HEK293 (cell line): ENCODE measurements at regions of chr11 and their contacts with region 1.

Region 1: DNA sequence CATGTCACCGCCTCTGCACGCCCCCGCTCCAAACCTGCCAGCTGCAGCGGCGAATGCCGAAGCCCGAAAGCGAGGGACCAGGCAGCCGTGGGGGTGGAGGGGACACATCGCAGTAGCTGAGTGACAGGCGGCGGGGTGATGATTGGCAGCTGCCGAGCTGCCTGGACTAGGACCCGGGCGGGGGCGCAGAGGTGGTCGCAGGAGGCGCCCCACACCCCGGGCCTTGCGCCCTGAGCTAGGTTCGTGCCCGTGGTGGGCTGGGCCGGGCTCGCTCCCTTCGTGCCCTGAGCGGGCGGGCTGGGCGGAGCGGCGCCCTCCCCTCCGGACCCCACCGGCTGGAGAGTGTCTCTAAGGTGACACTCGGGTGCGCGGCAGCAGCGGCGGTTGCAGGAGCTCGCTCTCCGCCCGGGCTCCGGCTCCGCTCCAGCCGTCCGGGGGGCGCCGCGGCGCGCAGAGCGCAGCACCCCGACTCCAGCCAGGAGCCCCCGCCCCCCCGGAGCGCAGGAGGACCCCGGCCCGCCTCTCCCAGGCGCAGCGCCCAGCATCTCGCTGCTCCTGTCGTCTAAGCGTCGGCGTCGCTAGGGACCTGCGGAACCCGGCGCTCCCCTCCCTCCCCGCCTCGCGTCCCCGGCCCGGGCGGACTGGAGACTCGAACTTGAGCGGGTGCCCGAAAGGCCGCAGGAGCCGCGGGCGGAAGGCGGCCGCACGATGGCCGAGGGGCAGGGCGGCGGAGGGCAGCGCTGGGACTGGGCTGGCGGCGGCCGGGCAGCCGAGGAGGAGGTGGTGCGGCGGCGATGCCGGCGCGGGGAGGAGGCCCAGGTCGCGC is 14.5 kb upstream of the DGKZ start:
- H3K4me3 ChIP-seq: peak overlapping the region; percentile 34
- H3K27ac ChIP-seq: no peak overlapping the region
- H3K4me1 ChIP-seq: no peaks in the 10 kb centered on the region
- CTCF ChIP-seq: no peak

Region 2: DNA sequence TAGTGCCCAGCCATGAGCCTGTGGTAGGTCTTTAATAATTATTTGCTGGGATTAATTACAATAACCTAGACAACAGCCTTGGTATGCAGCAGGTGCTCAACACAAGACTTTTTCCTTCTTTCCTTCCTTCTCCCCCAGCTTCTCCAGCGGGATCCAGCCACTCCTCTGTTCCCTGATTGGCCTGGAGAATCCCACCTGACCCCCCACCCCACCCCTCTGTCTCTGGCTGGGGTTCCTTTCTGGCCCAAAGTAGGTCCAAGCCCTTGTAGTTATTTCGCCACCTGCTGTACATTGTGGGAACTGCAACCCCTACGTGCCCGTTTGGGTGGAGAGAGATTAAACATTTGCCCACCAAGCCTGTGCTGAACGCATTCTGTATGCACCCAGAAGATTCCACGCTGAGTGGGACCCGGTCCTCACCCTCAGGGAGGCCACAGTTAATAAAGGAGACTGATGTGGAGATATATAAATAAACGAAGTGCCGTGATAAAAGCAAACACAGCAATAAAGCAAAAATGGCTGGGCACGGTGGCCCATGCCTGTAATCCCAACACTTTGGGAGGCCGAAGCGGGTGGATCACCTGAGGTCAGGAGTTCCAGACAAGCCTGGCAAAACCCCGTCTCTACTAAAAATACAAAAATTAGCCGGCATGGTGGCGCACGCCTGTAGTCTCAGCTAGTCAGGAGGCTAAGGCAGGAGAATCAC is 17.6 kb before region 1 on chr11:
- CTCF ChIA-PET with region 1: interaction called, 13 read pairs
- POLR2A ChIA-PET with region 1: no interaction called
- H3K4me3 ChIP-seq: no peak overlapping the region
- H3K27ac ChIP-seq: no peak overlapping the region
- H3K4me1 ChIP-seq: no peaks in the 10 kb centered on the region
- CTCF ChIP-seq: no peak

Region 3: DNA sequence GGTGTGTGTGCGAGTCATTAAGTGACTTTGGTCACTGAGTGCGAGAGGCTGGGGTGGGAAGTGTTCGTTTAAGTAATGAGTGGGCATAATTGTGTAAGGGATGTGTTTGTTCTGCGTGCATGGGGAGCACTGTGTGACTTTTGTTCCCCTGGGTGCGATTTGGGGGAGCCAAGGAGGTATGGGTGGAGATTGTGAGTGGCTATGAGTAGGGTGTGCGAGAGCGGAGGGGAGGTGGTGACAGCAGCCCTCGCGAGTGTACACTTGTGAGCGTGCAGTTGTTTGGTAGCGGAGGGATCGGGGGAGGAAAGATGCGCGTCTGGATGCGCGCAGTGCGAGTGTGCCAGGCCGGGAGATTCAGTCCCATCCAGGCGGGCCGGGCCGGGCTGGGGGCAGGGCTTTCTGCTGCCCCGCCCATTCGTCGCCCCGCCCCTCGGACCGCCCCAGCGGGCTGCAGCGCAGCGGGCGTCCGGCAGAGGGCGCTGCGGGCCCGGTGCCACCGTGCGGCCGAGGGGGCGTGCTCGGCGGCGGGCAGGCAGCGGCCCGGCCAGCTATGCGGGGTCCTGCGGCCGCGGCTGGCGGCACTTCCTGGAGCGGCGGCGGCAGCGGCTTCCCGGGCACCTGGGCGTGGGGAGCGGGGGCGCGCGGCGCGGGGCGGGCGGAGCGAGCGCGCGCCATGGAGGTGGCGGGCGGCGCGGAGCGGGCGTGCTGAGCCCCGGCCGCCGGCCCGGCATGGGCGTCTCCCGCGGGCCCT is 14.3 kb after region 1 on chr11 and contains the start of gene DGKZ:
- CTCF ChIA-PET with region 1: interaction called, 16 read pairs
- POLR2A ChIA-PET with region 1: no interaction called
- H3K4me3 ChIP-seq: peak within 1 kb of the TSS; percentile 85
- H3K27ac ChIP-seq: peak within 1 kb of the TSS; percentile 64; the same call in 1 of the 2 replicates
- H3K4me1 ChIP-seq: no peaks in the 10 kb centered on the region; the same call in 1 of the 2 replicates
- CTCF ChIP-seq: no peak; the same call in 1 of the 2 replicates

Region 4: DNA sequence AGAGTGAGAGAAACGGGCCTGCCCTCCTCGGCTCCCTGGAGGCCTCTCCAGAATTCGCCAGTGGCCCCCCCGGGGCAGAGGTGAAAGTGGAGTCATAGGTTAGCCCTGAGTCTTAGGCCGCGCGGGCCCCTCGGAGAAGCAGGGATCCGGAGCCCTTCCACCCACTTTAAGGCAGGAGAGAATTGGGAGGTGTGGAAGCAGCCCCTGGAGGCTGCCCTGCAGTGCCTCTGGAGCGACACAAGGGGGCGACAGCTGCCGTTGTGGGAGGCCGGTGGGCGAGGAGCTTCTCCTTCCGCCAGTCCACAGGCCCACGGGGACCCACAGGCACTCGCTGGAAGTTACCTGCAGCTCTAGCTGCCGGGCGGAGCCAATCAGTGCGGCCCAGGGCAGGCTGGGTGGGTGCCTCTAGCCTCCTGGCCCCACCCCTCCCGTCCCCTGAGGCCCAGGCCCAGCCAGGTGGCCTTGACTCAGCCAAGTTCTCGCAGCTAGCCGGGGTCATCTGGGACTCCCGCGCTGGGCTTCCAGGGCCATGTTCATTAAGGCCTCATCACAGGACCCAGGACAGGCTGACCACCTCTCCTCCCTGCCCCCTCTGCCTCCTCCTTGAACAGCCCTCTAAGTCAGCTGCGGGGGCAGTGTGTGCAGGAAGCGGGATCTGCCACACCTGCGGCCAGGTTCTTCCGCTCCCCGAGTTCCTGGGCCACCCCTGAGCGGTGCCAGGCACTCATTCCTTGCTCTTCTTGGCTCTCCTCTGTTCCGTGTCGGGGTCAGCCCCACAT is 19.5 kb after region 1 on chr11:
- CTCF ChIA-PET with region 1: interaction called, 16 read pairs
- POLR2A ChIA-PET with region 1: interaction called, 10 read pairs
- H3K4me3 ChIP-seq: no peak overlapping the region
- H3K27ac ChIP-seq: no peak overlapping the region
- H3K4me1 ChIP-seq: no peaks in the 10 kb centered on the region; the same call in 1 of the 2 replicates
- CTCF ChIP-seq: peak; percentile 70

Region 5: DNA sequence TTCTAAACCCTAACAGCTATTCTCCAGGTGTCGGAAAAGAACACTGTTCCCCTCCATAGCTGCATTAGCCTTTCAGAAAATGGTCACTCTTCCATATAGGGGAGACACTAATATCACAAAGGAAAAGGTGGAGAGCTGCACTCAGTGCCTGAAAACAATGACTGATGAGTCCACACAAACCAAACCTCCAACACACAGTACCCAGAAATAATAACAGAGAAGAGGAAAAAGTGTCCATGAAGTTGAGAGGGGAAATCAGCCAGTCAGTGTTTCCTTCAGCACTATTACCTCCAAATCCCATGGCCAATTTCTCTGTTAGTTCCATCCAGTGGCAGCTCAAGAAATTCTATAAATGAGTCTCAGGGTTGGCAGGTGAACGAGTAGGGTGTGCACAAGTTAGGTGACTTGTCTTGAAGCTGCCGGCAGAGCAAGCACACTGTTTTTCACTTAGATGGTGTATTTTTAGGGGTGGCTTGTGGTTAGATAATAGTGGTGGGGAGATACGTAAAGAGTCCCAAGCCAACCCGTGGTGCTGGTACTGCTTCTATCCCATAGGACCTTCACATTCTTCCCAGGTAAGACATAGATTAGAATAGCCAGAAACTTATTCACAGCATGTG is 143.3 kb after region 1 on chr11:
- CTCF ChIA-PET with region 1: no interaction called
- POLR2A ChIA-PET with region 1: no interaction called
- H3K4me3 ChIP-seq: no peak overlapping the region
- H3K27ac ChIP-seq: no peak overlapping the region
- H3K4me1 ChIP-seq: no peaks in the 10 kb centered on the region
- CTCF ChIP-seq: no peak